Endothelial cell of umbilical vein (primary cell): ENCODE measurements at regions of chr19 and their contacts with region 1.

Region 1: DNA sequence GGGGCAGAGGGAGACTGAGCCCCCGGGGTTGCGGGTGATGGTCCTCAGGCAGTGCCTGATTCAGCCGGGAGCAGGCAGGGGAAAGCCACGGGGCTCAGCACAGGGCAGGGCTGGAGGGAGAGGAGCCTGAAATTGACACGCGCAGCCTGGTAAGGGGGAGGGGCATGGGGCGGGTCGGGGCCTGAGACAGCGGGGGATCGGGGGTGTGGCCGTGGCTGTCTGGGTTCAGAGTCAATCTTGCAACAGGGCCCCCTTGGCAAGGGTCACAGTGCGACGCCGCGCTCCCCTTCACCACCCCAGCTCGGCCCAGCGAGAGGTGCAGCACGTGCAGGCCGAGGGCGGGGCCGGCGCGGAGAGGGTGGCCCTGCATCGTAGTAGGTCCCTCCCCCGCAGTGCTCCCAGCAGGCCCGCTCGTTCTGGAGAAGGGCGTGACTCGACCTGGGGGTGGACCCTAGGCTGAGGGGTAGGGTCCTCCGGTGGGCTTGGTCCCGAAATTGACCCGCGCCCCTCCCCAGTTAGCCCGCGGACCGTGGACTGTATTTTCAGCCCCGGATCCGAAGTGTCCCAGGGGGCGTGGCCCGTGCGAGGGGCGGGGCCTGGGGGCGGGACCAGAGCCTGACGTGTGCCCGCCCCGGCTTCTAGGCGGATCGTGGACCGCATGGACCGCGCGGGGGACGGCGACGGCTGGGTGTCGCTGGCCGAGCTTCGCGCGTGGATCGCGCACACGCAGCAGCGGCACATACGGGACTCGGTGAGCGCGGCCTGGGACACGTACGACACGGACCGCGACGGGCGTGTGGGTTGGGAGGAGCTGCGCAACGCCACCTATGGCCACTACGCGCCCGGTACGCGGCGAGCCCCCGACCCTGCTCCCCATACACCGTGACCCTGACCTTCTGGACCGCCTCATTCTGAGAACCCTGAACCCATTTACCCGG is 6.0 kb downstream of the RCN3 start:
- DNase-seq: peak; percentile 85
- H3K4me3 ChIP-seq: peak overlapping the region; percentile 15 to 53 (median 38)
- H3K27ac ChIP-seq: no peak overlapping the region
- H3K4me1 ChIP-seq: peaks cover 7% of the 10 kb centered on the region
- H3K27me3 ChIP-seq: no peaks in the 10 kb centered on the region
- CTCF ChIP-seq: peak; percentile 32 to 53
- POLR2A ChIP-seq: no peak

Region 2: DNA sequence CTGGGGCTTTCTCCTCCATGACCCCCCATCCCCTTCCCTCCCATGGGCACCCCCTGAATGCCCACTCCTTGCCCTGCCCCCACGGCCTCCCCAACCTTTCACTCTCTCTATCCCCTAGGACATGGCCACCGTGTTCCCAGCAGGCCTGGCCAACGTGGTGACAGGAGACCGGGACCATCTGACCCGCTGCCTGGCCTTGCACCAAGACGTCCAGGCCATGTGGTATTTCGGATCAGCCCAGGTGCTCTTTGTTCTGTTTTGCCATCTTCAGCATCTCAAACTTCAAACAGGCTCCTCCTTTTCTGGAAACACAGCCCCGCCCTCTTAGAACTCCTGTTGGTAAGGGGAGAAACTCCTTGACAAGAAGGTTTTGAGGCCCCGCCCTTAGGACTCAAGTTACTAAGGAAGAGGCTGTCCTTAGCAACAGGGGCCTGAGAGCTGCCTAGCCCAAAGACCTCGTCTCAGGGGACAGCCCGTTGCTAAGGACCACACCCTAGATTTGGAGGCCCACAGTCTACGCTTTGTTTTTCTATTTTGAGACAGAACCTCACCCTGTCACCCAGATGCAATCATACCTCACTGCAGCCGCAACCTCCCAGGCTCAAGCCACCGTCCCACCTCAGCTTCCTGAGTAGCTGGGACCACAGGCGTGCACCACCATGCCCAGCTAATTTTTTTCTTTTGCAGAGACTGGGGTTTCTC is 64.9 kb before region 1 on chr19:
- CTCF ChIA-PET with region 1: no interaction called
- POLR2A ChIA-PET with region 1: no interaction called
- dilution Hi-C with region 1: no loop called
- intact Hi-C with region 1: no loop called
- DNase-seq: no peak
- H3K4me3 ChIP-seq: no peak overlapping the region
- H3K27ac ChIP-seq: no peak overlapping the region
- H3K4me1 ChIP-seq: peaks cover 4% of the 10 kb centered on the region
- H3K27me3 ChIP-seq: no peaks in the 10 kb centered on the region
- CTCF ChIP-seq: no peak
- POLR2A ChIP-seq: no peak

Region 3: DNA sequence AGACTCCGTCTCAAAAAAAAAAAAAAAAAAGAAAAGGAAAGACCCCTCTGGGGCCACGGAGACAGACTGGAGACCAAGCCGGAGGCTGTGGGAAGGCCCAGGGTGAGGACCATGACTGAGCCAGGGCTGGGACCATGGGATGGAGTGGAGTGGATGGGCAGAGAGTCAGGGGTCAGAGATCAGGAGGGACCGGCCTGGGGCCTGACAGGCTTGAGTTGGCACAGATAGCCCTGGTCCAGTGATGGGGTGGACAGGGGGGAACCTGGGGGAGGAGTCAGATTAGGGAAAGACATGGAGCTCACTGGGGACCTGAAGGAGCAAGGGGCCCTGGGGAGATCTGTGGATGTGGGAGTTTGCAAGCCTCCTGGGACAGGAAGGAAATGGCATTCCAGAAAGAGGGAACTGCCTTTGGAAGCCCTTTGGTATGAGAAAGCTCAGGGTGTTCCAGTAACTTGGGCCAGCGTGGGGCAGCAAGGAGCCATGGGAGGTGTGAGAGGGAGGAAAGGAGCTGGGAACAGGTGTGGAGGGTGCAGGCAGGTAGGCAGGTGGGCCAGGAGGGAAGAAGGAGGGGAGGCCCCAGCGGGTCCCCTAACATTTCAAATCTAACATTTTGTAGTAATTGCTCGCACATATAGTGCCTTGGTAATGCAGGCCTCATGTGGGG is 52.7 kb before region 1 on chr19:
- CTCF ChIA-PET with region 1: interaction called, 3 read pairs
- POLR2A ChIA-PET with region 1: interaction called, 11 read pairs
- dilution Hi-C with region 1: no loop called
- intact Hi-C with region 1: no loop called
- DNase-seq: no peak
- H3K4me3 ChIP-seq: no peak overlapping the region
- H3K27ac ChIP-seq: no peak overlapping the region
- H3K4me1 ChIP-seq: peaks cover 4% of the 10 kb centered on the region
- H3K27me3 ChIP-seq: no peaks in the 10 kb centered on the region
- CTCF ChIP-seq: no peak
- POLR2A ChIP-seq: no peak